ENCODE measurements at regions of chr19 and their contacts with region 1.

Region 1: DNA sequence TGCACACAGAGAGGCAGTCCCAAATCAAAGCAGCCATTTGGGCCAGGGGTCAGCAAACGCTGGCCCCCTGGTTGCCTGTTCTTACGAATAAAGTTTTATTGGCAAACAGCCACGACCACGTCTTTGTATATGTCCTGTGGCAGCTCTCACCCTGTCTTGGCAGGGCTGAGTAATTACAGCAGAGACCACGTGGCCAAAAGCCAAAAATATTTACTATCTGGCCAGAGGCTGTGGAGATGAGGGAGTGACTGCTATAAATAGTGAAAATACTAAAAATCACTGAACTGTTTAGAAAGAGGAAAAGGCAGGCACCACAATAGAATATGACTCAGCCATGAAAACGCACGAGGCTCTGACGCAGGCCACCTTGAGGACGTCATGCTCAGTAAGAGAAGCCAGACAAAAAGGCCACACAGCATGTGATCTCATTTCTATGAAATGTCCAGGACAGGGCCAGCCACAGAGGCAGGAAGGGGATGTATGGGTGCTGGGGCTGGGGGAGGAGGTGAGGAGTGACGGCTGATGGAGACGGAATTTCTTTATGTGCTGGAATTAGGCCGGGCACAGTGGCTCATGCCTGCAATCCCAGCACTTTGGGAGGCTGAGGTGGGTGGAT is 29.4 kb downstream of the SMIM24 start:
- DNase-seq: peak; percentile 97
- H3K4me3 ChIP-seq: no peak overlapping the region
- H3K27ac ChIP-seq: peak overlapping the region; percentile 58
- H3K4me1 ChIP-seq: peaks cover 8% of the 10 kb centered on the region
- H3K27me3 ChIP-seq: no peaks in the 10 kb centered on the region
- CTCF ChIP-seq: no peak

Region 2: DNA sequence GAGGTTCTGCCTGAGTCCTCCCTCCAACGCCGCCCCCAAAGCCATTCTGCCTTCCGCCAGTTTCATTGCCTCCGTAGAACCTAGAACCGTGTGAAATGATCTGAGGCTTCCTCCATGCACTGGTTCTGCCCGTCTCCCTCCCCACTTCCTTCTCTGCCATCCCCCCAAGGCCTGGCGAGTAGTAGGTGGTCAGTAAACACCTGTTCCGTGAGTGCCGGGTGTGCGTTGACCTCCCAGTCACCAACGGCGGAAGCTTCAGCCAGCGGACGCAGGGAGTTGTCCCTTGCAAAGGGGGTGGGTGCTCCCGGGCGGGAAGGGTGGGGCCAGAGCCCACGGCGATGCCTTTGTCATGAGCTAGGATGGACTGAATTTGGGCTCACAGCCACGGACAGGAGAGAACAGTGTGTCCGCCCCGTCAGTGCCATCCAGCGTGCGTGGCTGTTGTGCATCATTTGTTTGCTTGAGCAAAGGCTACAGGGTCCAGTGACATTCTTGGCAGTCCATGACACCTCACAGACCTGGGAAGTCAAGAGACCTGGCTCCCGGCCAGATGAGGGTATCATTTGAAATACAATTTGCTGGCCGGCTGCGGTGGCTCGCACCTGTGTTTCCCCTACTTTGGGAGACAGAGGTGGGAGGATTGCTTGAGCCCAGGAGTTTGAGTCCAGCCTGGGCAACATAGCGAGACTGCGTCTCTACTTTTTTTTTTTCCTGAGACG is 41.4 kb before region 1 on chr19:
- CTCF ChIA-PET with region 1: no interaction called
- dilution Hi-C with region 1: loop called (anchors 5 kb)
- in situ Hi-C with region 1: no loop called
- intact Hi-C with region 1: no loop called
- DNase-seq: no peak
- H3K4me3 ChIP-seq: no peak overlapping the region
- H3K27ac ChIP-seq: no peak overlapping the region
- H3K4me1 ChIP-seq: peaks cover 3% of the 10 kb centered on the region
- H3K27me3 ChIP-seq: no peaks in the 10 kb centered on the region
- CTCF ChIP-seq: no peak

Region 3: GRCh38 chr19:3434712-3435553 is 16.0 kb before region 1 on chr19:
- CTCF ChIA-PET with region 1: no interaction called
- dilution Hi-C with region 1: no loop called
- in situ Hi-C with region 1: no loop called
- intact Hi-C with region 1: loop called (anchors 1 kb)
- DNase-seq: peak; percentile 94
- H3K4me3 ChIP-seq: peak overlapping the region; percentile 24 to 51 (median 49)
- H3K27ac ChIP-seq: peak overlapping the region; percentile 59
- H3K4me1 ChIP-seq: peaks cover 11% of the 10 kb centered on the region
- H3K27me3 ChIP-seq: no peaks in the 10 kb centered on the region
- CTCF ChIP-seq: no peak

Region 4: DNA sequence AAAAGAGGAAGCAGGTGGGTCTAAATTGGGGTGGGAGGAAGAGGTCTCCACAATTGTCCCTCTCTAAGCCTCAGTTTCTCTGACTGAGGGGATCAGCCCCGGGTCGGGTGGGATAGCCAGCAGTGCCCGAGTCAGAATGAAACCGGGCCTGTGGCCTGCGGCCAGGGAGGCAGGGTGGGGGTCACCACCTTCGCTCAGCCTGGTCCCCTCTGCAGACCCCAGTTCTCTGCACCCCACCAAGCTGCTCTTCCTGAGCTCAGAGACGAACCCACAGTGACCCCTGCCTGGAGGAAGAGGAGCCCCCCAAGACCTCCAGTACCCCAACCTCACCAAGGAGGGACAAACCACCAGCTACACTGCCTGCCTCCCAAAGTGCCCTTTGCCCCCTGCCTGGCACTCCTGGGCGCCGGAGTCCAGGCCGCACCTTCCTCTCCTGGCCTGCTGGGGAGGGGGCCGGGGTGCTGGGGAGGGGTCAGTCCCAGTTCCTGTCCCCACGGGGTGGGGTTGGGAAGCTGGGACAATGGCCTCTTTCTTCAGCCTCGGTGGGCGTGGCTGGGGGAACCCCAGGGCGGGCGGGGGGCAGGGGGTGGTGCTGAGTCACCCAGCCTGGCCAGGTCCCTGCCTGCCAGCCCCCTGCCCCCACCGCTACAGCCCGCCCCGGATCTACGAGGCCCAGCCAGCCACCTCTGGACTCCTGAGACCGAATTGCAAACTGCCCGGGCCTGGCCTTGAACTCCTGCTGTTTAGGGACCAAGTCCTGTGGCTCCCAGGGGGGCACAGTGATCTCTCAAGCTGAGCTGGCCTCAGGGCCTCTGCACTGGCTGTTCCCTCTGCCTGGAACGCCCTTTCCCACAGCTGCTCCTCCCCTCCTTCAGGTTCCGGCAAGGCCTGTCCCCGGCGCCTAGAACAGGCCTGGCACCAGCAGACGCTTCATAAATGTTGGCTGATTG is 601.4 kb after region 1 on chr19:
- CTCF ChIA-PET with region 1: no interaction called
- dilution Hi-C with region 1: no loop called
- in situ Hi-C with region 1: no loop called
- intact Hi-C with region 1: no loop called
- DNase-seq: peak; percentile 91
- H3K4me3 ChIP-seq: peak overlapping the region; percentile 21 to 34 (median 33)
- H3K27ac ChIP-seq: peak overlapping the region; percentile 97
- H3K4me1 ChIP-seq: peaks cover 32% of the 10 kb centered on the region
- H3K27me3 ChIP-seq: no peaks in the 10 kb centered on the region
- CTCF ChIP-seq: no peak